CD4-positive, alpha-beta memory T cell (primary cell): ENCODE measurements at regions of chr2 and their contacts with region 1.

Region 1: GRCh38 chr2:189347540-189347939 is 93.7 kb upstream of the WDR75 start:
- DNase-seq: peak; percentile 34 to 50 (median 47)
- H3K4me3 ChIP-seq: no peak overlapping the region
- H3K4me3 Mint-ChIP-seq: no peak overlapping the region
- H3K27ac ChIP-seq: no peak overlapping the region
- H3K27ac Mint-ChIP-seq: no peak overlapping the region
- H3K4me1 ChIP-seq: peaks cover 12% of the 10 kb centered on the region
- H3K4me1 Mint-ChIP-seq: peaks cover 3 to 14% (median 9%) of the 10 kb centered on the region in 4 donors
- H3K27me3 ChIP-seq: no peaks in the 10 kb centered on the region
- H3K27me3 Mint-ChIP-seq: no peaks in the 10 kb centered on the region

Region 2: GRCh38 chr2:188524519-188525113 is 822.9 kb before region 1 on chr2:
- CTCF ChIA-PET with region 1: interaction called, 3 read pairs
- POLR2A ChIA-PET with region 1: no interaction called
- intact Hi-C with region 1: loop called (anchors 5 kb)
- DNase-seq: peak in 4 of 5 donors; percentile 13 to 27 (median 23)
- H3K4me3 ChIP-seq: no peak overlapping the region
- H3K4me3 Mint-ChIP-seq: no peak overlapping the region
- H3K27ac ChIP-seq: no peak overlapping the region
- H3K27ac Mint-ChIP-seq: no peak overlapping the region
- H3K4me1 ChIP-seq: no peaks in the 10 kb centered on the region
- H3K4me1 Mint-ChIP-seq: no peaks in the 10 kb centered on the region
- H3K27me3 ChIP-seq: no peaks in the 10 kb centered on the region
- H3K27me3 Mint-ChIP-seq: no peaks in the 10 kb centered on the region

Region 3: DNA sequence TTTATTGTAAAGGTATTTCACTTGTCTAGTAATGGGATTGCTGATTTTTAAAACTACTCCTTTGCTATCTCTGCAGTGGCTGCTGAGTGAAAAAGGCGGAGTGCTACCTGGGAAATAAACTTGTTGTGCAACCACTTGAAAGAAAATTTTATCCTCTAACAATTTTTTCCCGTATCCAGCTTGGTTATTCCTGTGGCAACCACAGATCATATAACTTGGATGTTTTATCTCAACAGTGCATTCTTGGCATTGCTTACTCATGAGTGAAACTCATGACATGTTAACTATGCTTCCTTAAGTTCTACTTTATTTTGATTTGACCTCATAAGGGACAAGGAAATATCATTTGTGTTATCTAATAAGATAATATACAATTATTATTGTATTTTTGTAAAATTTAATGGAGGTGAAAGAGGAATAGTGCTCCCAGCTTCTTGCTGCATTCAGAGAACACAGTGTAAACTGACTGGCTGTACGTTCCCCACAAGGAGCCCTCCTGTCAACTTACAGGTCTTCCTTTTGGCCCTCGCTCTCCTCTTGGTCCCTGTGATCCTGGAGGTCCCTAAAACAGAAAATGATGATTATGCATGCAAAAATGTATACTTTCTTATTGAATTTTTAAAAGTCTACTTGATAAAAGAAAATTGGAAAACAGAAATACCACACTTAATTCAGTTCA is 250.6 kb before region 1 on chr2:
- CTCF ChIA-PET with region 1: interaction called, 30 read pairs
- POLR2A ChIA-PET with region 1: no interaction called
- intact Hi-C with region 1: loop called (anchors 1 kb)
- DNase-seq: no peak
- H3K4me3 ChIP-seq: no peak overlapping the region
- H3K4me3 Mint-ChIP-seq: no peak overlapping the region
- H3K27ac ChIP-seq: no peak overlapping the region
- H3K27ac Mint-ChIP-seq: peak overlapping the region in 1 of 7 donors; percentile 68
- H3K4me1 ChIP-seq: no peaks in the 10 kb centered on the region
- H3K4me1 Mint-ChIP-seq: peaks cover 0 to 3% (median 0%) of the 10 kb centered on the region in 4 donors
- H3K27me3 ChIP-seq: no peaks in the 10 kb centered on the region
- H3K27me3 Mint-ChIP-seq: no peaks in the 10 kb centered on the region

Region 4: DNA sequence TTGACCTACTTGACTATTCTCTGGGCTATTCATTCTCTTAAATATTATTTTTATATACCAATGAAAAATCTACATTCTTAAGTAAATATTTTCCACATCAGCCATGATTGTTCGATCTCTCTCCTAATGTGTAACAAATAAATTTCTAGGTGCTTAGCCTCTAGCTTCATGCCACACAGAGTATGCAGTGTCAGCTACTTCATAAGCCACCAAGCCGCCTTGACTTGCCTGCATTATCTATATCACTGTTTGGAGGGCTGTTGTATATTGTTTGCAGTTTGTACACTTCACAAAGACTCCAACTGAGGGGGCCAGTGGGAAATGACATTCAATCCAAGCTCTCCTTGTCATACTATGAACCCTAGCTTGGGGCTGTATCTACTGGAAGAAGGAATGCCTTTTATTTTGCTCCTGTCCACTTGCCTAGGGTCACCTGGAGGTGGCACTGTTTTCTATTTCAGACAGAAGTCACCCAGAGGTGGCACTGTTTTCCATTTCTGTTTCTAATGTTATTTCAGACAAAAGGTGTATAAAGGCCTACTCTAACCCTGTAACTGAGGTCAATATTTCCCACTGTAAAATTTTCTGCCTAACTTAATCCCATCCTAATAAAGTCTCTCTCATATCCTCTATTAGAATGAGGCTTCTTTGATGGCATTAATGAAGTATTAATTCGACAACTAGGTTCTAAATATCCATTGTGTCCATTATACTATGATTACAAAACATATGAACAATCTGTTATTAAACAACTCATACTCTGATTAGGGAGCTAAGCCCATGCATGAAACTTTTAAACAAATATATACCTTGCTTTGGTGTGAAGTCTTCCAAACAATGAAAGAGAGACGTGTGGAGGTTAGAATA is 204.4 kb before region 1 on chr2:
- CTCF ChIA-PET with region 1: interaction called, 27 read pairs
- POLR2A ChIA-PET with region 1: no interaction called
- intact Hi-C with region 1: loop called (anchors 1 kb)
- DNase-seq: peak; percentile 52 to 62 (median 54)
- H3K4me3 ChIP-seq: no peak overlapping the region
- H3K4me3 Mint-ChIP-seq: no peak overlapping the region
- H3K27ac ChIP-seq: no peak overlapping the region
- H3K27ac Mint-ChIP-seq: no peak overlapping the region
- H3K4me1 ChIP-seq: no peaks in the 10 kb centered on the region
- H3K4me1 Mint-ChIP-seq: no peaks in the 10 kb centered on the region
- H3K27me3 ChIP-seq: no peaks in the 10 kb centered on the region
- H3K27me3 Mint-ChIP-seq: no peaks in the 10 kb centered on the region

Region 5: GRCh38 chr2:189287982-189288521 is 59.5 kb before region 1 on chr2:
- CTCF ChIA-PET with region 1: interaction called, 5 read pairs
- POLR2A ChIA-PET with region 1: no interaction called
- intact Hi-C with region 1: loop called (anchors 5 kb)
- DNase-seq: peak in 4 of 5 donors; percentile 22 to 36 (median 28)
- H3K4me3 ChIP-seq: no peak overlapping the region
- H3K4me3 Mint-ChIP-seq: no peak overlapping the region
- H3K27ac ChIP-seq: no peak overlapping the region
- H3K27ac Mint-ChIP-seq: peak overlapping the region in 1 of 7 donors; percentile 49
- H3K4me1 ChIP-seq: no peaks in the 10 kb centered on the region
- H3K4me1 Mint-ChIP-seq: peaks cover 4 to 15% (median 7%) of the 10 kb centered on the region in 4 donors
- H3K27me3 ChIP-seq: no peaks in the 10 kb centered on the region
- H3K27me3 Mint-ChIP-seq: no peaks in the 10 kb centered on the region

Region 6: GRCh38 chr2:189304360-189304759 is 43.2 kb before region 1 on chr2:
- CTCF ChIA-PET with region 1: no interaction called
- POLR2A ChIA-PET with region 1: no interaction called
- intact Hi-C with region 1: loop called (anchors 1 kb)
- DNase-seq: peak; percentile 40 to 59 (median 53)
- H3K4me3 ChIP-seq: no peak overlapping the region
- H3K4me3 Mint-ChIP-seq: peak overlapping the region in 7 of 8 donors; percentile 47 to 73 (median 62)
- H3K27ac ChIP-seq: no peak overlapping the region
- H3K27ac Mint-ChIP-seq: peak overlapping the region; percentile 65 to 93 (median 82)
- H3K4me1 ChIP-seq: peaks cover 61% of the 10 kb centered on the region
- H3K4me1 Mint-ChIP-seq: peaks cover 44 to 70% (median 56%) of the 10 kb centered on the region in 4 donors
- H3K27me3 ChIP-seq: no peaks in the 10 kb centered on the region
- H3K27me3 Mint-ChIP-seq: no peaks in the 10 kb centered on the region

Region 7: GRCh38 chr2:189412330-189412953 is 64.9 kb after region 1 on chr2:
- CTCF ChIA-PET with region 1: interaction called, 5 read pairs
- POLR2A ChIA-PET with region 1: no interaction called
- intact Hi-C with region 1: loop called (anchors 5 kb)
- DNase-seq: peak in 4 of 5 donors; percentile 44 to 54 (median 46)
- H3K4me3 ChIP-seq: no peak overlapping the region
- H3K4me3 Mint-ChIP-seq: no peak overlapping the region
- H3K27ac ChIP-seq: no peak overlapping the region
- H3K27ac Mint-ChIP-seq: no peak overlapping the region
- H3K4me1 ChIP-seq: no peaks in the 10 kb centered on the region
- H3K4me1 Mint-ChIP-seq: peaks cover 7 to 9% (median 9%) of the 10 kb centered on the region in 4 donors
- H3K27me3 ChIP-seq: no peaks in the 10 kb centered on the region
- H3K27me3 Mint-ChIP-seq: no peaks in the 10 kb centered on the region